Cardiac septum (tissue), 1 donor: ENCODE measurements at regions of chr6 and their contacts with region 1.

Region 1: GRCh38 chr6:3813150-3813780 is 35.9 kb upstream of the FAM50B start:
- DNase-seq: peak; percentile 92

Region 2: DNA sequence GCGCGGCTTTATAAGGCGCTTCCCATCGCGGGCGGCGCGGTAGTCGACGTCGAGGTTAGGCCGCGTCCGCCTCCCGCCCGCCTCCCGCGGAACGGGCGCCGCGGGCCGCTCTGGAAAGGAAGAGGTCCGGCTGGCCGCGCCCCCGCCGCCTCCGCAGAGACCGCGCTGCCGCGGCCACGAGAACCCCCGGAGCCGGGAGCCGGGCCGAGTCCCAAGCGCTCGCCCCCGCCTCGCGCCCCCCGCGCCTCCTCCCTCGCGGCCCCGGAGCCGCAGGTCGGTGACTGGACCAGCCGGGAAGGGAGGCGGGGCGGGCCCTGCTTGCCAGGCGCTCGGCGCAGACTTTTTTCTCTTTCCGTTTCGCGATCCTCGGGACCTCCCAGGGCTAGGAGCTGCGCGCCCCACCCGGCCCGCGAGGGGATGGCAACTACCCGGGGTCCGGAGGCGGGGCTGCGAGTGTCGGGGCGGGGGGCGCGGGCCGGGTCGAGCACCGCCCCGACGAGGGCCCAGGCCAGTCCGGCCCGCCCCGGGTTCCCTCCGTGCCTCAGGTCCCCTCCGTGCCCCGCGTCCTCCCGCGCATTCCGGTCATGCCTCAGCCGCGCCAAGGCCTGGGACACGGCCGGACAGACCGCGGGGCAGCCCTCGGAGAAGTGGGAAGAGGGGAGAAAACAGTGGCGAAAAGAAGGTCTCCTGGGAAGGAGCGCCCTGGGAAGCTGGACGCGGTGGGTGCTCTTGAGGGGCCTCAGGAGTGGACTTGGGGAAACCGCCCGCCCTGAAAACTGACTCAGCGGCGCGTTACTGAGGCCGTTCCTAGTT is 61.3 kb before region 1 on chr6:
- intact Hi-C with region 1: loop called (anchors 5 kb)
- DNase-seq: peak; percentile 94

Region 3: DNA sequence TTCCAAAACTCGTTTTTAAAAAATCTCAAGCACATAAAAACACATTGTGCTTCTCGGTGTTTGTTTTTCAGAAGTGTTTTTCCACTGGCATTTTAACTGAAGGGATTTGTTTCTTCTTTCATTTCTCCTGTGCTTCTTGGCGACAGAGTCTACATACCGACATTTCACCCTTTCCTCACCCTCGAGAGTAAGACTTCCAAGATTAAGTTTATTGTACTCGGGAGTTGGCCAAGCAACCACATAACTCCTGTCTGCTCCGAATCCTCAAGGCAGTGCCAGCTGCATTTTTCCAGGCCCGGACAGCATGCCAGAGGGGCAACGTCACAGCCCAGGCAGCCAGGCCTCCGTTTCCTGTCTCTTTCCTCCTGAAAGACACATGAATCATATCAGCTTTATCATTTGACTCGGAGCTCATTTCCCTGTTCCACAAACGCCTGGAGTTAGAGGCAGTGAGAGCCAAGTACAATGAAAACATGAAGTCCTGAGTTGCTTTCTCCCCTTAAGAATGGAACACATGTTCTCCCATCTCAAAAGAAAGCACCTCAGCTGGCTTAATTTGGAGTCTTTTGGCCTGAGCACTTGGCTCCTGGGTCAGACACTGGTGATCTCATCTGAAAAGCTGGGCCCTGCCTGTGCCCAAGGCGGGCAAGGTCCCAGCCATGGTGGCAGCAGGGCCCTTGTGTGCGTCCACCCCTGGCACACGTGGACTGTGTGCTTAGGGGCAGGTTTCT is 12.8 kb after region 1 on chr6:
- intact Hi-C with region 1: loop called (anchors 1 kb)
- DNase-seq: peak; percentile 91

Region 4: GRCh38 chr6:3884007-3884745 is 70.9 kb after region 1 on chr6:
- intact Hi-C with region 1: no loop called
- DNase-seq: no peak